IMR-90 (cell line): ENCODE measurements at regions of chr10 and their contacts with region 1.

Region 1: DNA sequence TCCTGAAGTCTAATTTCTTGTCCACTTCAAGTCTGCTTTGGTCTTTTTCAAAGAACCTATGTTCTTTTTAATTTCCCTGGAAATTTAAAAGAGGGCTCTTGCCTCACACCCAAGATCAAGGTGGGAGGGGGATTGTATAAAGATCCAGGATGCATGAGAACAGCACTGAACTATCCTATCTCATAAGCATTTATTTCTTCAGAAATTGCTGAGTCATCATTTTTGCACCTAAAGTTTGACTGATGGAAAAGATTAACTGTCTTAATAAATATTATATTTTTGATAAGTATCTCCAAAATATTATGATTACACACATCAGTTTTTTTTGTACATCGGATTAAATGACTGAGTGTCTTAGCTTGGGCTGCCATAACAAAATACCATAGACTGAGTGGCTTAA is 90.5 kb downstream of the RPS24 start:
- DNase-seq: no peak
- ATAC-seq: no peak
- H3K4me3 ChIP-seq: no peak overlapping the region
- H3K27ac ChIP-seq: no peak overlapping the region
- H3K4me1 ChIP-seq: no peaks in the 10 kb centered on the region
- H3K27me3 ChIP-seq: peaks cover 30% of the 10 kb centered on the region
- CTCF ChIP-seq: no peak
- POLR2A ChIP-seq: no peak
- RAD21 ChIP-seq: no peak

Region 2: GRCh38 chr10:76444034-76444800 is 1680.0 kb before region 1 on chr10:
- CTCF ChIA-PET with region 1: no interaction called
- POLR2A ChIA-PET with region 1: no interaction called
- dilution Hi-C with region 1: no loop called
- in situ Hi-C with region 1: no loop called
- intact Hi-C with region 1: no loop called
- DNase-seq: peak; percentile 13
- ATAC-seq: peak; percentile 44; the same call in 1 of the 2 replicates
- H3K4me3 ChIP-seq: no peak overlapping the region
- H3K27ac ChIP-seq: no peak overlapping the region
- H3K4me1 ChIP-seq: peaks cover 4% of the 10 kb centered on the region; the same call in 1 of the 2 replicates
- H3K27me3 ChIP-seq: no peaks in the 10 kb centered on the region; the same call in 1 of the 2 replicates
- CTCF ChIP-seq: no peak
- POLR2A ChIP-seq: no peak
- RAD21 ChIP-seq: no peak

Region 3: GRCh38 chr10:78109210-78109609 is 15.0 kb before region 1 on chr10:
- CTCF ChIA-PET with region 1: no interaction called
- POLR2A ChIA-PET with region 1: no interaction called
- dilution Hi-C with region 1: no loop called
- in situ Hi-C with region 1: no loop called
- intact Hi-C with region 1: loop called (anchors 2 kb)
- DNase-seq: no peak
- ATAC-seq: no peak
- H3K4me3 ChIP-seq: no peak overlapping the region
- H3K27ac ChIP-seq: no peak overlapping the region
- H3K4me1 ChIP-seq: no peaks in the 10 kb centered on the region
- H3K27me3 ChIP-seq: peaks cover 31% of the 10 kb centered on the region
- CTCF ChIP-seq: no peak
- POLR2A ChIP-seq: no peak
- RAD21 ChIP-seq: no peak

Region 4: GRCh38 chr10:78170026-78170475 is 45.9 kb after region 1 on chr10:
- CTCF ChIA-PET with region 1: no interaction called
- POLR2A ChIA-PET with region 1: no interaction called
- dilution Hi-C with region 1: no loop called
- in situ Hi-C with region 1: no loop called
- intact Hi-C with region 1: no loop called
- DNase-seq: peak; percentile 69
- ATAC-seq: peak; percentile 68
- H3K4me3 ChIP-seq: no peak overlapping the region
- H3K27ac ChIP-seq: no peak overlapping the region
- H3K4me1 ChIP-seq: peaks cover 5% of the 10 kb centered on the region
- H3K27me3 ChIP-seq: peaks cover under 1% of the 10 kb centered on the region; the same call in 1 of the 2 replicates
- CTCF ChIP-seq: no peak
- POLR2A ChIP-seq: no peak
- RAD21 ChIP-seq: no peak